ENCODE measurements at regions of chr14 and their contacts with region 1.

Region 1: DNA sequence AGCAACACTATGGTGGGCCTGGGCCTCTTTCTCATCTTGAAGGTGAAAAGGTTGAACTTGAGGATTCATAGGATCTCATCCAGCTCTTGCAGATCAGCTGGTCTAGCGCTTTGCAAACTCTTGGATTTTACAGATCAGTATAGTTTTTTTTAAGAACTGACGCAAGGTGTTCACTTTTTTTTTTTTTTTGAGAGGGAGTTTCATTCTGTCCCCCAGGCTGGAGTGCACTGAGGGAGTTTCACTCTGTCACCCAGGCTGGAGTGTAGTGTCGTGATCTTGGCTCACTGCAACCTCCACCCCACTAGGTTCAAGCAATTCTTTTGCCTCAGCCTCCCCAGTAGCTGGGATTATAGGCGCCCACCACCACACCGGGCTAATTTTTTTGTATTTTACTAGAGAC is 20.4 kb upstream of the LGMN start:
- DNase-seq: no peak
- H3K4me3 Mint-ChIP-seq: no peak overlapping the region
- H3K27ac Mint-ChIP-seq: no peak overlapping the region
- H3K4me1 Mint-ChIP-seq: peaks cover 44% of the 10 kb centered on the region
- H3K27me3 Mint-ChIP-seq: peaks cover 37% of the 10 kb centered on the region

Region 2: GRCh38 chr14:92563359-92563758 is 205.4 kb before region 1 on chr14:
- intact Hi-C with region 1: loop called (anchors 1 kb)
- DNase-seq: peak; percentile 38
- H3K4me3 Mint-ChIP-seq: no peak overlapping the region
- H3K27ac Mint-ChIP-seq: peak overlapping the region; percentile 10
- H3K4me1 Mint-ChIP-seq: peaks cover 73% of the 10 kb centered on the region
- H3K27me3 Mint-ChIP-seq: no peaks in the 10 kb centered on the region

Region 3: DNA sequence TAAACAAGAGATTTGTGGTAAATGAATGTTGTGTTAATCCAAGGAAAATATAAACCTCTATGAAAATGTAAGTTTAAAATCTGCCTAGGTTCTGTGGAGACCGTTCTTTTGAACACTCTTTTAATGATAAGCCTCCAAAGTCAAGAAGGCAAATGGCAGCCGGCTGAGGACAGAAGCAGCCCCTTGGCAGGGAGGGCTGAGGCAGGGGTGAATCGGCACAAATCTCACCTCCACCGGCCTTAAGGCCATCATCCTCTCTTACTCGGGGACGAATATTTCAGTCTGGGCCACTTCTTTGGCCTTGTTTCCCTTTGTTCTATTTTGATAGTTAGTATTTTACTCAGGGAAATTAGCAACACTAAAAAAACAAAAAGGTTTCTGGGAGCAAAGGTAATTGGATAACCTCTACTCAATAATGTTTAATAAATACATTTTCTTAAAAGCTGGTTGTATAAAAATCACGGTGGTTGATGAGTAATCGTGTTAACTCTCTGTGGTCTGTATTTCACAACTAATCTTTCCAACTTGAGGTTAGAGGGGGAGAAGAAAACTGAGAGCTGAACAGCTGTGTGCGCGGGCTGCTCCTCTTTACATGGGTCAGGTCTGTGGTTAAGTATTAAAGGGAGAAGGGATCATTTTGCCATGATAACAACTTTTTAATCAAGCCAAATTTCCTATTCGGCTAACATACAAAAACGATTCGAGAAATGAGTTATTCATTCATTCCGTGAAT is 39.0 kb before region 1 on chr14:
- intact Hi-C with region 1: loop called (anchors 1 kb)
- DNase-seq: no peak
- H3K4me3 Mint-ChIP-seq: no peak overlapping the region
- H3K27ac Mint-ChIP-seq: peak overlapping the region; percentile 90
- H3K4me1 Mint-ChIP-seq: peaks cover 18% of the 10 kb centered on the region
- H3K27me3 Mint-ChIP-seq: peaks cover 40% of the 10 kb centered on the region

Region 4: DNA sequence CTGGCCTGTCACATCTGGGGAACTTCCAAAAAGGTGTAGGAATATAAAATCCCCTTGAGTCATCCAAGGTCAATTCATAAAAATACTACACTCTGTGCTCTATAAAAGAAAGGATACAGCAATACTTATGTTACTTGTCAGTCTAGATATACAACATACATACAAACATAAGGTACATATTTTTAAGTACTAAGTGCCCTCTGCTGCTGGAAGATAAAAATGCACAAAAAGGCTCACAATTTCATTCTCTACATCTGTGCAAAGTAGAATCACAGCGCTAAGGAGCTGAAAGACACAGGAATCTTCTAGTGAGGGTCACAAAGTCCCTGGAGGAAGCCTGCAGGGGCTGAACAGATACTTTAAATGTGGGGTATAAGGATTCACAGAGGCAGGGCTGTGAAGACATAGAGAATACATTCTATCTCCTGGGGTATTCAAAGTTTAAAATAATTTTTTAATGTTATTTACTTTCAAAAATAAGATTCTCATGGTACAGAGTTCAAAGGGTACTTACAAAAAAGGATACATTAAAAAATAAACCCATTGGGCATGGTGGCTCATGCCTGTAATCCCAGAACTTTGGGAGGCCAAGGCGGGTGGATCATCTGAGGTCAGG is 15.1 kb after region 1 on chr14:
- intact Hi-C with region 1: loop called (anchors 2 kb)
- DNase-seq: peak; percentile 20
- H3K4me3 Mint-ChIP-seq: no peak overlapping the region
- H3K27ac Mint-ChIP-seq: no peak overlapping the region
- H3K4me1 Mint-ChIP-seq: peaks cover 26% of the 10 kb centered on the region
- H3K27me3 Mint-ChIP-seq: peaks cover 8% of the 10 kb centered on the region